Left cardiac atrium (tissue), 4 donors: ENCODE measurements at regions of chr1 and their contacts with region 1.

Region 1: DNA sequence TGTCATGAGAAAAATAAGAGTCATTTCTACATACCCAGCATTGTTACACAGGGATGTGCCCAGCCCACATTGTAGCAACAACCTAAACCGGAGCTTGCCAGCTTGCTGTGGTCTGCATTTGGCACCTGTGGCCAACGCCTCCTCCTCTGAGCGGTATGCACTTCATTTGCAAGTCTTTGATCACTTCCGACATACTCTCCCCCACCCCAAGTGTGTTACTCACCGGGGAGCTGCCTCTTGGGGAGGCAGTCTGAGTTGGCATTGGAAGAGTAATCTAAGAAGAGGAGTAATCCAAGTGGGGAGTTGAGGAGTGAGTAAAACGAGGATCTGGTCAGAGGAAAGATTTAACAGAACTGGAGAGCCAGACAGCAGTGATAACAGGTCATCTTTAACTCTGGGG is 3.8 kb downstream of the BCL9 start:
- DNase-seq: peak; percentile 30
- ATAC-seq: peak; percentile 7 to 41

Region 2: GRCh38 chr1:147494998-147495580 is 50.0 kb before region 1 on chr1:
- intact Hi-C with region 1: no loop called
- DNase-seq: peak; percentile 85
- ATAC-seq: peak; percentile 94 to 96

Region 3: GRCh38 chr1:147509786-147510395 is 35.2 kb before region 1 on chr1:
- intact Hi-C with region 1: loop called in 1 of 2 experiments (anchors 1 kb)
- DNase-seq: peak; percentile 39
- ATAC-seq: peak; percentile 85 to 94

Region 4: GRCh38 chr1:147599362-147600118 is 54.4 kb after region 1 on chr1:
- intact Hi-C with region 1: loop called (anchors 1 to 10 kb)
- DNase-seq: peak; percentile 99
- ATAC-seq: peak; percentile 93 to 96